H1 (cell line): ENCODE measurements at regions of chr1 and their contacts with region 1.

Region 1: DNA sequence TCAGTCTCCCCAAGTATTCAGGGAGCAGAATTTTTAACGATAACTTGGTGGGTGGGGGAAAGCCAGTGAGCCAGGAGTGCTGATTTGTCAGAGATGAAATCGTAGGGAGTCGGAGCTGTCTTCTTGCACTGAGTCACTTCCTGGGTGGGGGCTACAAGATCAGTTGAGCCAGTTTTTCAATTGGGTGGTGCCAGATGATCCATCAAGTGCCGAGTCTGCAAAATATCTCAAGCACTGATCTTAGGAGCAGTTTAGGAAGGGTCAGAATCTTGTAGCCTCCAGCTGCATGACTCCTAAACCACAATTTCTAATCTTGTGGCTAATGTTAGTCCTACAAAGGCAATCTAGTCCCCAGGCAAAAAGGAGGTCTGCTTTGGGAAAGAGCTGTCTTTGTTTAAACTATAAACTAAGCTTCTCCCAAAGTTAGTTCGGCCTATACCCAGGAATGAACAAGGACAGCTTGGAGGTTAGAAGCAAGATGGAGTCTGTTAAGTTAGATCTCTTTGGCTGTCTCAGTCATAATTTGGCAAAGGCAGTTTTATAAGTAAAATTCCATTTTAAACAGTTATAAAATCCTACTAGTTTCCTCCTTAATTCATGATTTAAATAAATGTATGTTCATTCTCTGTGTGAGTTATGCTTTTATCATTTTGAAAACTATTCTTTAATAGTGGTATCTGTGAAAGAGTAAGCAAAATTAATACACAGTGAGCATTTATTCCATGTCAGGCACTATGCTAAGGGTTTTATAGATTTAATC is 51.7 kb downstream of the SLC16A1 start:
- DNase-seq: peak in 1 of 2 experiments; percentile 44
- H3K4me3 ChIP-seq: no peak overlapping the region
- H3K27ac ChIP-seq: no peak overlapping the region
- H3K4me1 ChIP-seq: peaks cover 2 to 19% (median 8%) of the 10 kb centered on the region in 4 experiments; a peak in 4 of 7 replicates
- H3K27me3 ChIP-seq: no peaks in the 10 kb centered on the region
- CTCF ChIP-seq: no peak
- EP300 ChIP-seq: no peak
- POLR2A ChIP-seq: no peak
- RAD21 ChIP-seq: no peak

Region 2: DNA sequence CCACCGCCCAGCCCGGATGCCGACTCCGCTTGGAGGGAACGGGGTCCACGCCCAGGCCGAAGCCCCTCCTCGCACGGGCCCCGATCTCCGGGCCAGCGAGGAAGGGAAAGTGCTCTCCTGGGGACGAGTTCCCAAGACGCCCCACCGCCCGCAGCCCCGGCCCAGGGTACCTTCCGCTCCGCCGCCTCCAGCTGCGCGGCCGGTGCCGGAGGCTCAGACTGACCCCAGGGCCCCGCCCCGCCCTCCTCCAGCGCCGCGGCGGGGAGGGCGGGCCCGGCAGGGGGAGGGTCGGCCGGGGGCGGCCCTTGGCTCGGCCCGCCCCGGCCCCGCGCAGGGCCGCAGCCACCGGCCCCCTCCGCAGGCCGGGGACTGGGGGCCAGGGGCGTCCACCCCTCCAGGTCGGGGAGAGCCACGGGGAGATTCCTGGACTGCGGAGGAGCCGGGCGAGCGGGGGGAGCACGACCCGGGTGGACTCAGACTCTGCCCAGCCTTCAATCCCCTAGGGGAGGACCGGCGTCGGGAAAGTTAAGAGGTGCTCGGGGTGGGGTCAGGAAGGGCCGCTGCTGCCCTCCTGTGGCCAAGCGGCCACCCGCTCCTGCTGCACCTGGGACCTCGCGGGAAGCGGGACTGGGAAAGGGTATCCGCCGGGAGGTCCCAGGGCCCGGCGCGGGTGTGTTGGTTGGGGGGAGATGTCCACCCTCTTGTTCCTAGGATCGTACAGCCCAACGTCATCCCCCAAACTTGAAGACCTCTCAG is 197.2 kb before region 1 on chr1 and contains the start of gene RHOC:
- CTCF ChIA-PET with region 1: no interaction called
- POLR2A ChIA-PET with region 1: no interaction called
- DNase-seq: peak; percentile 74 to 94
- H3K4me3 ChIP-seq: peak within 1 kb of the TSS; percentile 39 to 78 (median 66)
- H3K27ac ChIP-seq: no peak within 1 kb of the TSS
- H3K4me1 ChIP-seq: peaks cover 10 to 37% (median 20%) of the 10 kb centered on the region in 4 experiments
- H3K27me3 ChIP-seq: peaks cover 0 to 10% (median 4%) of the 10 kb centered on the region in 4 experiments; a peak in 2 of 7 replicates
- CTCF ChIP-seq: peak in 2 of 3 experiments; percentile 90 to 92; a peak in 3 of 4 replicates
- EP300 ChIP-seq: peak in 1 of 2 experiments; percentile 45; a peak in 1 of 3 replicates
- POLR2A ChIP-seq: peak in 1 of 2 experiments; percentile 42; a peak in 1 of 3 replicates
- RAD21 ChIP-seq: peak; percentile 87 to 91
- total RNA-seq, gene RHOC: 53.6 and 57.6 TPM in 2 replicates

Region 3: GRCh38 chr1:112888416-112889029 is 15.7 kb before region 1 on chr1:
- CTCF ChIA-PET with region 1: interaction called, 9 read pairs
- POLR2A ChIA-PET with region 1: interaction called, 17 read pairs
- DNase-seq: no peak
- H3K4me3 ChIP-seq: no peak overlapping the region
- H3K27ac ChIP-seq: no peak overlapping the region
- H3K4me1 ChIP-seq: no peaks in the 10 kb centered on the region
- H3K27me3 ChIP-seq: no peaks in the 10 kb centered on the region
- CTCF ChIP-seq: no peak
- EP300 ChIP-seq: no peak
- POLR2A ChIP-seq: no peak
- RAD21 ChIP-seq: no peak

Region 4: GRCh38 chr1:112964347-112964746 is 60.1 kb after region 1 on chr1:
- CTCF ChIA-PET with region 1: no interaction called
- POLR2A ChIA-PET with region 1: no interaction called
- DNase-seq: no peak
- H3K4me3 ChIP-seq: no peak overlapping the region
- H3K27ac ChIP-seq: no peak overlapping the region
- H3K4me1 ChIP-seq: no peaks in the 10 kb centered on the region; a peak in 1 of 7 replicates
- H3K27me3 ChIP-seq: no peaks in the 10 kb centered on the region
- CTCF ChIP-seq: no peak
- EP300 ChIP-seq: no peak
- POLR2A ChIP-seq: no peak
- RAD21 ChIP-seq: no peak